Vagina (tissue), 2 donors: ENCODE measurements at regions of chr1 and their contacts with region 1.

Region 1: GRCh38 chr1:171245458-171246064 is 2.7 kb upstream of the FMO1 start:
- DNase-seq: no peak
- H3K4me3 ChIP-seq: no peak overlapping the region
- H3K27ac ChIP-seq: no peak overlapping the region
- H3K4me1 ChIP-seq: no peaks in the 10 kb centered on the region
- H3K27me3 ChIP-seq: no peaks in the 10 kb centered on the region
- CTCF ChIP-seq: peak; percentile 50 to 64 (median 64)
- POLR2A ChIP-seq: no peak

Region 2: GRCh38 chr1:171110621-171111326 is 134.8 kb before region 1 on chr1:
- intact Hi-C with region 1: no loop called
- DNase-seq: no peak
- H3K4me3 ChIP-seq: no peak overlapping the region
- H3K27ac ChIP-seq: no peak overlapping the region
- H3K4me1 ChIP-seq: no peaks in the 10 kb centered on the region
- H3K27me3 ChIP-seq: no peaks in the 10 kb centered on the region
- CTCF ChIP-seq: no peak
- POLR2A ChIP-seq: no peak

Region 3: DNA sequence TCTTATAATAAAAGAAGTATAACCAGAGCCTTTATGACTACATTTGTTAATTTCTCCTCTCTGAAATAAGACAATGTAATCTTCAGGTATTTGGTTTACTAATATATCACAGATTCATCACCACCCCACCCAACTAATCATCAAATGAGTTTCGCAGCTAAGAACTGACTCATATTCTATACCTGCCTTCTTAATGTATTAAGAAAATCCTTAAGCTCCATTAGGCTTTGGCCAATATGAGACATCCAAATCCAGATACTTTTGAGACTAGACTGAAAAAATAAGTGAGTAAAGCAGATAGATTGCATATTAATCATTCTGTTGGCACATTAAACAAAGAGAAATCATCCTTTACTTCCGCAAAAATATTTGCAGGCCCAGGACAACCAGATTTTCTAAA is 79.2 kb before region 1 on chr1:
- intact Hi-C with region 1: no loop called
- DNase-seq: no peak
- H3K4me3 ChIP-seq: no peak overlapping the region
- H3K27ac ChIP-seq: no peak overlapping the region
- H3K4me1 ChIP-seq: no peaks in the 10 kb centered on the region
- H3K27me3 ChIP-seq: no peaks in the 10 kb centered on the region
- CTCF ChIP-seq: no peak
- POLR2A ChIP-seq: no peak

Region 4: GRCh38 chr1:171313835-171314320 is 68.3 kb after region 1 on chr1 and contains the start of gene FMO4:
- intact Hi-C with region 1: loop called (anchors 5 kb)
- DNase-seq: peak in 1 of 2 donors; percentile 98
- H3K4me3 ChIP-seq: peak within 1 kb of the TSS; percentile 22 to 23
- H3K27ac ChIP-seq: peak within 1 kb of the TSS; percentile 69
- H3K4me1 ChIP-seq: peaks cover 11% of the 10 kb centered on the region
- H3K27me3 ChIP-seq: no peaks in the 10 kb centered on the region
- CTCF ChIP-seq: peak; percentile 71 to 91 (median 84)
- POLR2A ChIP-seq: no peak
- total RNA-seq, gene FMO4: 0.98 TPM